BJ (cell line): ENCODE measurements at regions of chr5 and their contacts with region 1.

Region 1: GRCh38 chr5:134236318-134236717 is 10.4 kb upstream of the PPP2CA start:
- DNase-seq: no peak
- H3K4me3 ChIP-seq: no peak overlapping the region
- H3K27me3 ChIP-seq: no peaks in the 10 kb centered on the region
- CTCF ChIP-seq: no peak

Region 2: DNA sequence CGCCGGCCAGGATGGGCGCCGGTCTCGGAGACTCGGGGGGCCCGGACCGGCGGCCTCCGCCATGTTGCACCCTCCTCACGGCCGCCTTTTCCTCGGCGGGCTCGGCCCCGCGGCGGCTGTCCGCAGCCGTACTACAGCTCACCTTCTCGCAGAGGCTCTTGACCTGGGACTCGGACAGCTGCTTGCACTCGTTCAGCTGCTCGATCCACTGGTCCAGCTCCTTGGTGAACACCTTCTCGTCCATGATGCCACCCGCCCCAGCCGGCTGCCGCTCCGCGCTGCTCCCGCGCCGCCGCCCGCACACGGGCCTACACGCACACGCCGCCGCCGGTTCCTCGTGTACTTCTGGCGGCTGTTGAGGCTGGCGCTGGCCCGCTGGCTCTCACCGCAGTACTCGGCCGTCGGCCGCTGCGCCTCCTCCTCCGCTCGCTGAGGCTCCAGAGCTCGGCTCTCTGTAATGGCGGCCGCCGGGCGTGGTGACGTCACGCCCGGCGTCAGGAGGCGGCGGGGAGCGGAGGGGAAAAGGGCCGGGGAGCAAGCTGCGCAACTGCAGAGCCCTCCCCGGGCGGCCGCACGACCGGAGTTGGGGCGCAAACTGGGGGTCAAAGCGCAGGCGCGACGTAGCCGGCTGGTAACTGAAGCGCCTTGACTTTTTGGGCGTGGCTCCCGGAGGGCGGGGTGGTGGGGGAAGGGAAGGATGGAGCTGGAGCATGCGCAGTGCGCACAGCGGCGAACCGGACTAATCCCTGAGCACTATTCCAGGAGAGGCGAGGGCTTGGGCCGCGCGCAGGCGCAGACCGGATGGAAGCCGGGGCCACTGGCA is 10.5 kb before region 1 on chr5 and contains the start of gene PPP2CA:
- CTCF ChIA-PET with region 1: no interaction called
- POLR2A ChIA-PET with region 1: interaction called, 10 read pairs
- DNase-seq: peak; percentile 98
- H3K4me3 ChIP-seq: peak within 1 kb of the TSS; percentile 99
- H3K27me3 ChIP-seq: no peaks in the 10 kb centered on the region
- CTCF ChIP-seq: no peak
- polyA plus RNA-seq, gene PPP2CA: 77.1 and 121 TPM in 2 replicates

Region 3: DNA sequence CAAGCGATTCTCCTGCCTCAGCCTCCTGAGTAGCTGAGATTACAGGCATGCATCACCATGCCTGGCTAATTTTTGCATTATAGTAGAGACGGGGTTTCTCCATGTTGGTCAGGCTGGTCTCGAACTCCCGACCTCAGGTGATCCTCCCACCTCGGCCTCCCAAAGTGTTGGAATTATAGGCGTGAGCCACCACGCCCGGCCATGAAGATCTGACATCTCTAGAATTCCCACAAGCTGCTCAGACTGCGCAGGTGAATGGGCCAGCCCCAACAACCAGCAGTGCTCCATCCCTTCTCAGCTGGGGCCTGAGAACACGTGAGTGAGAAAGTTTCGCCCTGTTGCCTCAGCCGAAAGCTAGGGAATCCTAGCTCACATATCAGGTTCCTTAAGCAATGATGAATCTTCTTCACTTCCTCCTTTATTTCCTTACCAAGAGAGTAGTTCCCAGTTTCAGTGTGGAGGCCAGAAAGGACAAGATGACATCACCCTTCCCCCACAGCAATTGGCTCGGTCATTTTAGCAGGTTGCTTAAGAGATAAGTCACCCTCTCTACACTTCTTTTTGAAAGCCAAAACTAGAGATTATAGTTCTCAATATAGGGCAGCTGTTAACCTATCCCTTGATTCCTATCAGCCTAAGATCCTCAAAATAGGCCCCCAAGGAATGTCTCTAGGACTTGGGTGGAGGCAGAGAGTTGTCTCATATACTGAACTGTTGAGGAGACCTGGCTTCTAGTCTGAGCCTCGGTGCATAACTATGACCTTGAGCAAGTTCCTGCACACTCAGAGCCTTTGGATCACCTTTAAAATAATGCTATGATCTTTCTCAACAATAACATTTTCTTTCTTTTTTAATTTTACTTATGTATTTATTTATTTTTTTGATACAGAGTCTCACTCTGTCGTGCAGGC is 13.4 kb after region 1 on chr5:
- CTCF ChIA-PET with region 1: no interaction called
- POLR2A ChIA-PET with region 1: no interaction called
- DNase-seq: no peak
- H3K4me3 ChIP-seq: no peak overlapping the region
- H3K27me3 ChIP-seq: no peaks in the 10 kb centered on the region
- CTCF ChIP-seq: no peak